HCT116 (cell line): ENCODE measurements at regions of chr2 and their contacts with region 1.

Region 1: GRCh38 chr2:236702660-236703372 is 133.2 kb downstream of the ACKR3 start:
- DNase-seq: no peak
- ATAC-seq: no peak; the same call in 1 of the 2 replicates
- H3K4me3 ChIP-seq: no peak overlapping the region
- H3K27ac ChIP-seq: no peak overlapping the region
- H3K4me1 ChIP-seq: no peaks in the 10 kb centered on the region
- H3K27me3 ChIP-seq: peaks cover 11% of the 10 kb centered on the region; the same call in 1 of the 2 replicates
- CTCF ChIP-seq: no peak
- POLR2A ChIP-seq: no peak
- RAD21 ChIP-seq: no peak

Region 2: GRCh38 chr2:236662231-236663185 is 40.3 kb before region 1 on chr2:
- CTCF ChIA-PET with region 1: no interaction called
- POLR2A ChIA-PET with region 1: no interaction called
- RAD21 ChIA-PET with region 1: no interaction called
- intact Hi-C with region 1: loop called (anchors 1 kb)
- DNase-seq: no peak
- ATAC-seq: no peak
- H3K4me3 ChIP-seq: no peak overlapping the region
- H3K27ac ChIP-seq: no peak overlapping the region
- H3K4me1 ChIP-seq: peaks cover 0 to 4% of the 10 kb centered on the region in 2 experiments; a peak in 3 of 4 replicates
- H3K27me3 ChIP-seq: peaks cover 64% of the 10 kb centered on the region
- CTCF ChIP-seq: no peak
- POLR2A ChIP-seq: no peak
- RAD21 ChIP-seq: no peak